PC-9 (cell line): ENCODE measurements at regions of chr4 and their contacts with region 1.

Region 1: DNA sequence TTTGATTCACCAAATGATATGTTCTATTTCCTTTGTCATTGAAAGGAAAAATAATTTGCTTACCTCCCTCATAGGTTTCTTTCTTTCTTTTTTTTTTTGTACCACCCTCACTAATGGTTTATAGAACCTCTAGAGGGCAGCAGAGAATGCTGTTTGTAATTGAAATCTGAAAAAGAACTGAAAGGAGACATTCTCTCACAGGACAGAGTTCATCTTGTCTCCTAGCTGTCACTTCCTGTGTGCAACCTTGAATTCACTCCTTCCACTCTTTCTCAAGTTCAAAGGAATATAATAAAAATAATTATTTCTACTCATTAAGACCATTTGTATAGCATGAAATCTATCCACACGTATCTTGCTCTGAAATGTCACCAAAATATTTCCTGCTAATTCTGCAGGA is 51.0 kb downstream of the GUCY1B1 start:
- DNase-seq: no peak
- H3K4me3 ChIP-seq: no peak overlapping the region
- H3K27ac ChIP-seq: no peak overlapping the region
- H3K4me1 ChIP-seq: no peaks in the 10 kb centered on the region
- H3K27me3 ChIP-seq: no peaks in the 10 kb centered on the region
- CTCF ChIP-seq: peak; percentile 66

Region 2: GRCh38 chr4:155953151-155954114 is 143.6 kb after region 1 on chr4 and contains the start of gene CTSO:
- CTCF ChIA-PET with region 1: interaction called, 3 read pairs
- POLR2A ChIA-PET with region 1: no interaction called
- intact Hi-C with region 1: loop called (anchors 1 kb)
- DNase-seq: peak; percentile 44 to 63
- H3K4me3 ChIP-seq: peak within 1 kb of the TSS; percentile 75
- H3K27ac ChIP-seq: peak within 1 kb of the TSS; percentile 55
- H3K4me1 ChIP-seq: no peaks in the 10 kb centered on the region
- H3K27me3 ChIP-seq: no peaks in the 10 kb centered on the region
- CTCF ChIP-seq: peak; percentile 71
- total RNA-seq, gene CTSO: 4.8 and 5.0 TPM in 2 replicates

Region 3: DNA sequence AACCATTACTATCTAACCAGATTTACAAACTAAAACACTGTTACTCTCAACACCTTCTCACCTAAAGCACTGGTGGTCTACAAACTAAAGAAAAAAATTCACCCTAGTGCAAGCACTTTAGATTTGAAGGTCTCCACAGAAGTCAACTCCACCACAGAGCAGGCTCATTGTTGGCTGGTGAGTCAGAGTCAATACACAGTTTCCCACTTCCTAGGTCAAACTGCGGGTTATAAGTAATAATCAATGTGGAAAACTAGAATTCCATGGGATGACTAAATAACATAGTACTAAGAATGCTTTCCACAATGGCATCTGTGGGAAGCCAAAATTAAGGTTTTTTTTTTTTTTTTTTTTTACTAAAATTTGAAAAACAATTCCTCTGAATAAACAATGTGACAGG is 969.9 kb after region 1 on chr4:
- CTCF ChIA-PET with region 1: no interaction called
- POLR2A ChIA-PET with region 1: no interaction called
- intact Hi-C with region 1: no loop called
- DNase-seq: no peak
- H3K4me3 ChIP-seq: no peak overlapping the region
- H3K27ac ChIP-seq: no peak overlapping the region
- H3K4me1 ChIP-seq: peaks cover 15% of the 10 kb centered on the region
- H3K27me3 ChIP-seq: no peaks in the 10 kb centered on the region
- CTCF ChIP-seq: no peak